ENCODE measurements at regions of chr4 and their contacts with region 1.

Region 1: DNA sequence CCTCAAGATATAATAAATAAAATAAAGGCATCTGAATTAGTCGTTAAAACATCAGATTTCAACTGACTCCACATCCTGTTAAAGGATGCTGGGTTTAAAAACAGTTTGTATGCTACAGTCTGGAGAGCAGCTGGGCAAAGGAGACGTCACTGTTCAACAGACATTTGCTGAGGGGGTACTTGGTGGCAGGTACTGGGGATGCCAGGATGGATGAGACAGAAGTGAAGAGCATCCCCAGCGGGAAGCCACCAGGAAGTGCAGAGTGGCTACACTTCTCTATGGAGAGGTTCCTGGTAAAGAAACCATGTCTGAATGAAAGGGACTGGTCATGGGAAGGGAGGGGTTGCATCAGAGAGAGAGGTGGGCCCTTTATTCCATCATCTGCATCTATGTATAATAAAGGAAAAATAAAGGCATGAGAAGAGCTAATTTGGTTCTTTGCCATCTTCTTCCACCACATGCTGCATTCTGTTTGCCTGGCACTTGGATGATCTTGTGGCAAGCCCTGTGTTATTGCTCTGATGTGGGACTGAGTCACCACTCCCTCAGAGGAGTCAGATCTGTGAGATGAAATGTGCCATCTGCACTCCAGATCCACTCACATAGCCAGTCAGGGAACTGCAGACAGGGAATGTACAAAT is 145.0 kb downstream of the SOWAHB start:
- DNase-seq: peak; percentile 99
- H3K4me3 ChIP-seq: peak overlapping the region; percentile 36
- H3K27ac ChIP-seq: peak overlapping the region; percentile 99
- H3K27me3 ChIP-seq: no peaks in the 10 kb centered on the region
- CTCF ChIP-seq: no peak

Region 2: GRCh38 chr4:76388160-76388908 is 364.6 kb before region 1 on chr4:
- CTCF ChIA-PET with region 1: no interaction called
- POLR2A ChIA-PET with region 1: no interaction called
- DNase-seq: no peak
- H3K4me3 ChIP-seq: no peak overlapping the region
- H3K27ac ChIP-seq: no peak overlapping the region
- H3K27me3 ChIP-seq: peaks cover 4% of the 10 kb centered on the region
- CTCF ChIP-seq: no peak

Region 3: GRCh38 chr4:76545226-76545884 is 207.6 kb before region 1 on chr4:
- CTCF ChIA-PET with region 1: no interaction called
- POLR2A ChIA-PET with region 1: no interaction called
- DNase-seq: no peak
- H3K4me3 ChIP-seq: no peak overlapping the region
- H3K27ac ChIP-seq: peak overlapping the region; percentile 34
- H3K27me3 ChIP-seq: no peaks in the 10 kb centered on the region
- CTCF ChIP-seq: no peak

Region 4: GRCh38 chr4:76738086-76738931 is 14.7 kb before region 1 on chr4:
- CTCF ChIA-PET with region 1: interaction called, 8 read pairs
- POLR2A ChIA-PET with region 1: interaction called, 30 read pairs
- DNase-seq: peak; percentile 87
- H3K4me3 ChIP-seq: peak overlapping the region; percentile 8; the same call in 1 of the 2 replicates
- H3K27ac ChIP-seq: peak overlapping the region; percentile 94
- H3K27me3 ChIP-seq: no peaks in the 10 kb centered on the region
- CTCF ChIP-seq: no peak

Region 5: DNA sequence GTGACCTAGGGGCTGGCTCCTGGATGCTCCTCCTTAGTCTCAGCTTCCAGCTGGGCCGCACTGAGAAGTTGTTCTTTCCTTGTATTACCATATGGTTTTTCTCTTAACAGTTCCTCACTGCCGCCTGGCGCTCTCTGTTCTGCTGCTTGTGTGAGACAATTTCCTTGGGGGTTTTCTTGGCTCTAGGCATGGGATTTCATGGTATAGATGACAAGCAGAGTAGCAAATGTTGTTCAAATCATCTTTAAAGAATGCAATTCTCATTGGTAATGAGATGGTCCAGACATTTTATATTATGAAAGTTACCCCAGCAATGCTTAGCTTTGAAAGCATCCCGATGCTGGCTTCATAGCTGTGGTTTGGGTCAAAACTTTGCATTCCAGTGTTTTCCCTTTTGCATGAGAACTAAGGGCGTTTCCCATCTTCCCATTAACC is 234.2 kb after region 1 on chr4:
- CTCF ChIA-PET with region 1: interaction called, 12 read pairs
- POLR2A ChIA-PET with region 1: interaction called, 11 read pairs
- DNase-seq: peak; percentile 96
- H3K4me3 ChIP-seq: peak overlapping the region; percentile 14; the same call in 1 of the 2 replicates
- H3K27ac ChIP-seq: peak overlapping the region; percentile 96
- H3K27me3 ChIP-seq: no peaks in the 10 kb centered on the region
- CTCF ChIP-seq: peak; percentile 14; the same call in 1 of the 2 replicates